ENCODE measurements at regions of chr5 and their contacts with region 1.

Region 1: DNA sequence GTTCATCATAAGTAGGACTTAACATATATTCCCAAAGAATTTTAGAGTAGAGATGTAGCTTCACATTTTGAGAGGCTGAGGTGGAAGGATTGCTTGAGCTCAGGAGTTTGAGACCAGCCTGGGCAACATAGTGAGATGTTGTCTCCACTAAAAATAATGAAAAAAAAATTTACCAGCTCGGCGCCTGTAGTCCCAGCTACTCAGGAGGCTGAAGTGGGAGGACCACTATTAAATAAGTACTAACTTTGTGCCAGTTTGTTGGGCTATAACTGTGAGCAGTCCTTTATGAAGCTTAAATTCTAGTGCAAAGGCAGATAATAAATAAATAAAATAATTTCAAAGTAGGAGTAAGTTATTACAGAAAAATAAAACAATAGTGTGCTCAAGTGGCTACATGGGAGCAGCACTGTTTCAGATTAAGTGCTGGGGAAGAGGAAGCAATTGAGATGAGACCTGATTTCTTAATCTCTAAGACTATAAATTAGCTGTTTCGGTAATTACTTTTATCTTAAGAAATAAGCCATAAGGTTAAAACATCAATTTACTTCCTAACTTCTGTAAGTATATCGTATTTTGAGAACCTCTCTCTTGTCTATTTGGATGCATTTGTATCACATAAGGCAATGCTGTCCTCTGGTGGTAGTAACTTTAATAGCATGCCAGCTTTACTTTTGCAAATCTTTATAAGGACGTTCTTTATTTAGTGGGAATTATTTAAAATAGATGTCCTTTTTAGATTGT is 98.9 kb downstream of the CSNK1G3 start:
- DNase-seq: peak; percentile 77
- ATAC-seq: peak; percentile 73
- H3K4me3 ChIP-seq: no peak overlapping the region
- H3K4me3 Mint-ChIP-seq: no peak overlapping the region
- H3K27ac ChIP-seq: peak overlapping the region in 1 of 2 donors; percentile 60
- H3K27ac Mint-ChIP-seq: peak overlapping the region; percentile 47
- H3K4me1 ChIP-seq: no peaks in the 10 kb centered on the region
- H3K4me1 Mint-ChIP-seq: peaks cover 9% of the 10 kb centered on the region
- H3K27me3 ChIP-seq: no peaks in the 10 kb centered on the region
- H3K27me3 Mint-ChIP-seq: no peaks in the 10 kb centered on the region
- CTCF ChIP-seq: peak; percentile 100

Region 2: DNA sequence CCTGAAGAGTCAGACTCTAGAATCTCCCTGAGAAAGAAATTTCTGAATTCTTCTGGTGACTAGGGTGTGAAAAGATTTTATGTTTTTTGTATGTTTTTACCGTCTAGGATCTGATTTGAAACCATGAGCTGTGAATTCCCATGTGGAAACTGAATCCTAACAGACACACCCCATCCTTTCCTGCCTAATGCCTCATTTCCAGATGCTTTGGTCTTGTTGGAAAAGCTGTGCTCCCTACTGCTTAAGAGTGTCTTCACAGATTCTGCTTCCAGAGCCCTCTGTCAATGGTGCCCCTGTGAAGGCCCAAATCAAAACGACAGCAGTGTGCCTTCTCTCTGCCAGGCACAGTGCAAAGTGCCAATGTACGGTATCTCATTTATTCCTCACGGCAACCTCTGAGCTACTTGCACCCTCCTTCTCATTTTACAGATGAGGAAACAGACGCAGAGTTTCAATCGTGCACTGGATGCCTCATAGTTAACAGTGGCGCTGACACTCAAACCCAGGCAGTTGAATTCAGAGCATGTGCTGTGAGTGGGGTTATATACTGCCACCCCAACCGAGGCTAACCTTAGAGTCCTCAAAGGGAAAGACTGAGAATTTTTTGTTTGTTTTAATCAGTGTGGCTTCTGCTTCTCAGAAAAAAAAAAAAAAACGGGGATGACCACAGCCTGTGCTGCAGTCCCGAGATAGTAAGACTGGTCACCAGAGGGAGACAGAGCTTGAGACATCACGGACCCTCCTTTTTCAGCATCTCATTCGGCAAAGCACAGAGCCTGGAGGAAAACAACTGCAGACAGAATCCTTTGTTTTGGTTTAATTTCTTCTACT is 1110.4 kb before region 1 on chr5:
- CTCF ChIA-PET with region 1: no interaction called
- POLR2A ChIA-PET with region 1: no interaction called
- intact Hi-C with region 1: loop called (anchors 2 kb)
- DNase-seq: peak; percentile 25
- ATAC-seq: no peak
- H3K4me3 ChIP-seq: no peak overlapping the region
- H3K4me3 Mint-ChIP-seq: no peak overlapping the region
- H3K27ac ChIP-seq: no peak overlapping the region
- H3K27ac Mint-ChIP-seq: no peak overlapping the region
- H3K4me1 ChIP-seq: no peaks in the 10 kb centered on the region
- H3K4me1 Mint-ChIP-seq: peaks cover 4% of the 10 kb centered on the region
- H3K27me3 ChIP-seq: peaks cover 0 to 2% (median 0%) of the 10 kb centered on the region in 4 experiments
- H3K27me3 Mint-ChIP-seq: peaks cover 9% of the 10 kb centered on the region
- CTCF ChIP-seq: peak; percentile 34

Region 3: DNA sequence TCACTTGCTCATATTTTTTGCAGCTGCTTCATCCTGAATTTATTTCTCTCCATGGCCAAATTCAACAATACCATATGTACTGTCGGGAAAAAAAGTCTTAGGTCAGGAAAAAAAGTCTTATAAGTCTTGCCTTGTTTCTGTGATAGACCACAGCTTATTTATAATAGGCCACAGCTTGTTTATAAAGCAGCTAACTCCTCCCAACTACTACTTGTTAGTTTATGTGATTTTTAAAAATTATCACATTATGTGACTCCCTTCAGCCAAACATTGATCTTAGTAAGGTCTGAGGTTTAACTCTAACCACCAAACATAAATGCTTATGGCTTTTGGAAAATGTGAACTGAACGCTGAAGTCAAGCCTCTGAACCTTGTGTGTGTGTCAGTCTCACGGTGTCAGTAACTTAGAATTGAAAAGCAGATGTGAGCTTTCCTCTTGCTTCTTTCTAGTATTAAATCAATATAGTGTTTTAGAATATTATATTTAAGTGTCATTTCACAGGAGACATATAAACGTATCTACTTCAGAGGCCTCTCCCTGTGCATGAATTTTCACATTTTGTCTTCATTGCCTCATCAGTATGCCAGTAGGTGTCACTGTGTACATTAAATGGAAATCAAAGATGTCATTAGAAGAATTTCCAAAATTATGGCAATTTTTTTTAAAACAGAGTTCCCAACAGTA is 714.1 kb before region 1 on chr5:
- CTCF ChIA-PET with region 1: interaction called, 3 read pairs
- POLR2A ChIA-PET with region 1: no interaction called
- intact Hi-C with region 1: loop called (anchors 2 kb)
- DNase-seq: no peak
- ATAC-seq: no peak
- H3K4me3 ChIP-seq: no peak overlapping the region
- H3K4me3 Mint-ChIP-seq: no peak overlapping the region
- H3K27ac ChIP-seq: no peak overlapping the region
- H3K27ac Mint-ChIP-seq: no peak overlapping the region
- H3K4me1 ChIP-seq: no peaks in the 10 kb centered on the region
- H3K4me1 Mint-ChIP-seq: no peaks in the 10 kb centered on the region
- H3K27me3 ChIP-seq: no peaks in the 10 kb centered on the region
- H3K27me3 Mint-ChIP-seq: no peaks in the 10 kb centered on the region
- CTCF ChIP-seq: peak; percentile 45

Region 4: DNA sequence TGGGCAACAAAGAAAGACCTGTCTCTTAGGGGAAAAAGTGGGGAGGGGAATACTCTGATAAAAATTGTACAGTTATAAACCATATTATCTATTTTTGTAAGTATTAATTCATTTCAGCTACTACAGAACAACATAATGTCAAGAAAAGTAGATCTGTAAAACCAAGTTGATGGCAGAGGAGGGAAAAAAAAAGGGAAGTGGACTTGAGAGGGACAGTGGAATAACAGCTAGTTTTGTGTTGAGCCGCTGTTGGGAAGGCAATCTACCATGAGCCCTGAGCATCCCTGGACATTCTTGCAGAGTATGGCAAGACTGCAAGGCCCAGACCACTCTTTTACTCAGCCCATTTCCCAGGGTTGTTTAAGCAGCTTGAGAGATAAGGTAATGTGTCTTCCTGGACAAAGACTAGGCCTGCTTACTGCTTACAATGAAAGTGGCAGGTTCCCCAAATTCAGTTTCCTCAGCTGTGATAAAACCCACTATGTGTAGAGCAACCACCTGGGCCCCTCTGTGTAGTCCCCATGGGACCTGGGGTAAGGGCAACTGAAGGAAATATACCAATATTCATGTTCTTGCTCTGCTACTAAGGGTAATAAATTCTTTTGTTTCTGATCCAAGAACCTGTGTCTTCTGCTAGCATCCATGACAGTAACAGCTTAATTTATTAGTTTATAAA is 212.6 kb before region 1 on chr5:
- CTCF ChIA-PET with region 1: interaction called, 22 read pairs
- POLR2A ChIA-PET with region 1: no interaction called
- intact Hi-C with region 1: loop called (anchors 1 kb)
- DNase-seq: peak; percentile 84
- ATAC-seq: peak; percentile 99
- H3K4me3 ChIP-seq: no peak overlapping the region
- H3K4me3 Mint-ChIP-seq: peak overlapping the region; percentile 16
- H3K27ac ChIP-seq: peak overlapping the region; percentile 73
- H3K27ac Mint-ChIP-seq: peak overlapping the region; percentile 91
- H3K4me1 ChIP-seq: peaks cover 18 to 27% of the 10 kb centered on the region in 2 donors
- H3K4me1 Mint-ChIP-seq: peaks cover 30% of the 10 kb centered on the region
- H3K27me3 ChIP-seq: no peaks in the 10 kb centered on the region
- H3K27me3 Mint-ChIP-seq: no peaks in the 10 kb centered on the region
- CTCF ChIP-seq: no peak

Region 5: GRCh38 chr5:123511648-123512605 is 98.9 kb before region 1 on chr5 and contains the start of gene CSNK1G3:
- CTCF ChIA-PET with region 1: interaction called, 11 read pairs
- POLR2A ChIA-PET with region 1: no interaction called
- intact Hi-C with region 1: loop called (anchors 1 kb)
- DNase-seq: peak; percentile 95
- ATAC-seq: peak; percentile 89
- H3K4me3 ChIP-seq: peak within 1 kb of the TSS; percentile 86 to 92 (median 89)
- H3K4me3 Mint-ChIP-seq: peak within 1 kb of the TSS; percentile 100
- H3K27ac ChIP-seq: peak within 1 kb of the TSS; percentile 89 to 90
- H3K27ac Mint-ChIP-seq: peak within 1 kb of the TSS; percentile 99
- H3K4me1 ChIP-seq: peaks cover 33 to 39% of the 10 kb centered on the region in 2 donors
- H3K4me1 Mint-ChIP-seq: peaks cover 41% of the 10 kb centered on the region
- H3K27me3 ChIP-seq: no peaks in the 10 kb centered on the region
- H3K27me3 Mint-ChIP-seq: peaks cover 3% of the 10 kb centered on the region
- CTCF ChIP-seq: no peak
- total RNA-seq, gene CSNK1G3: 140 and 148 TPM in 2 replicates

Measured in B cell (primary cell).